B cell (primary cell): ENCODE measurements at regions of chr18 and their contacts with region 1.

Region 1: GRCh38 chr18:26226229-26227005 is at the start of gene TAF4B:
- DNase-seq: peak; percentile 96
- ATAC-seq: peak; percentile 85
- H3K4me3 ChIP-seq: peak within 1 kb of the TSS; percentile 66 to 91 (median 82)
- H3K4me3 Mint-ChIP-seq: peak within 1 kb of the TSS; percentile 94
- H3K27ac ChIP-seq: peak within 1 kb of the TSS; percentile 88 to 95
- H3K27ac Mint-ChIP-seq: peak within 1 kb of the TSS; percentile 96
- H3K4me1 ChIP-seq: peaks cover 21 to 24% of the 10 kb centered on the region in 2 donors
- H3K4me1 Mint-ChIP-seq: peaks cover 38% of the 10 kb centered on the region
- H3K27me3 ChIP-seq: no peaks in the 10 kb centered on the region
- H3K27me3 Mint-ChIP-seq: no peaks in the 10 kb centered on the region
- CTCF ChIP-seq: no peak
- total RNA-seq, gene TAF4B: 15.6 and 16.1 TPM in 2 replicates

Region 2: GRCh38 chr18:25351777-25352628 is 874.4 kb before region 1 on chr18 and contains the start of gene ZNF521:
- CTCF ChIA-PET with region 1: no interaction called
- POLR2A ChIA-PET with region 1: no interaction called
- intact Hi-C with region 1: loop called (anchors 2 kb)
- DNase-seq: peak; percentile 77
- ATAC-seq: peak; percentile 85
- H3K4me3 ChIP-seq: peak within 1 kb of the TSS; percentile 53 to 73 (median 70)
- H3K4me3 Mint-ChIP-seq: peak within 1 kb of the TSS; percentile 85
- H3K27ac ChIP-seq: no peak within 1 kb of the TSS
- H3K27ac Mint-ChIP-seq: peak within 1 kb of the TSS; percentile 46
- H3K4me1 ChIP-seq: peaks cover 24 to 28% of the 10 kb centered on the region in 2 donors
- H3K4me1 Mint-ChIP-seq: peaks cover 16% of the 10 kb centered on the region
- H3K27me3 ChIP-seq: peaks cover 0 to 53% (median 41%) of the 10 kb centered on the region in 4 experiments
- H3K27me3 Mint-ChIP-seq: peaks cover 43% of the 10 kb centered on the region
- CTCF ChIP-seq: no peak
- total RNA-seq, gene ZNF521: 9.0 and 12.3 TPM in 2 replicates

Region 3: GRCh38 chr18:25976554-25976953 is 249.9 kb before region 1 on chr18:
- CTCF ChIA-PET with region 1: no interaction called
- POLR2A ChIA-PET with region 1: no interaction called
- intact Hi-C with region 1: no loop called
- DNase-seq: no peak
- ATAC-seq: no peak
- H3K4me3 ChIP-seq: no peak overlapping the region
- H3K4me3 Mint-ChIP-seq: no peak overlapping the region
- H3K27ac ChIP-seq: no peak overlapping the region
- H3K27ac Mint-ChIP-seq: no peak overlapping the region
- H3K4me1 ChIP-seq: no peaks in the 10 kb centered on the region
- H3K4me1 Mint-ChIP-seq: peaks cover 4% of the 10 kb centered on the region
- H3K27me3 ChIP-seq: no peaks in the 10 kb centered on the region
- H3K27me3 Mint-ChIP-seq: peaks cover 5% of the 10 kb centered on the region
- CTCF ChIP-seq: no peak

Region 4: DNA sequence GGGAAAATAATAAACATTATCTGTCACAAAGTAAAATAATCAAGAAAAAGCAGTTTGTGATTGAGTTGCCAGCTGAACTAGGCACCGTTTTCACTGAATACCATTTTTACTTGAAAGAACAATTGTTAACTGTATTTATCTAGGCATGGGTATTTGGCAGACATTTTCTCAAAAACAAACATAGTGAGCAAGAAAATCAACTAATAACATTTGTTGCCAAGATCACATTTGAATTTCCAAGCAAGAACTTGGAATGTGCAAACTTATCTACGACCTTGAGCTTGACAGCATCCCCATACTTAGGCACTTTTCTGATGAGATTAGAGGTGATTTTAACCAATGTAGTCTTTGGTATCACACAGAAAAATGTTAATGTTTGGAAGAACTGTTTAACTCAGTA is 152.7 kb before region 1 on chr18:
- CTCF ChIA-PET with region 1: no interaction called
- POLR2A ChIA-PET with region 1: no interaction called
- intact Hi-C with region 1: loop called (anchors 5 kb)
- DNase-seq: no peak
- ATAC-seq: no peak
- H3K4me3 ChIP-seq: no peak overlapping the region
- H3K4me3 Mint-ChIP-seq: no peak overlapping the region
- H3K27ac ChIP-seq: no peak overlapping the region
- H3K27ac Mint-ChIP-seq: no peak overlapping the region
- H3K4me1 ChIP-seq: no peaks in the 10 kb centered on the region
- H3K4me1 Mint-ChIP-seq: peaks cover 28% of the 10 kb centered on the region
- H3K27me3 ChIP-seq: no peaks in the 10 kb centered on the region
- H3K27me3 Mint-ChIP-seq: no peaks in the 10 kb centered on the region
- CTCF ChIP-seq: no peak

Region 5: DNA sequence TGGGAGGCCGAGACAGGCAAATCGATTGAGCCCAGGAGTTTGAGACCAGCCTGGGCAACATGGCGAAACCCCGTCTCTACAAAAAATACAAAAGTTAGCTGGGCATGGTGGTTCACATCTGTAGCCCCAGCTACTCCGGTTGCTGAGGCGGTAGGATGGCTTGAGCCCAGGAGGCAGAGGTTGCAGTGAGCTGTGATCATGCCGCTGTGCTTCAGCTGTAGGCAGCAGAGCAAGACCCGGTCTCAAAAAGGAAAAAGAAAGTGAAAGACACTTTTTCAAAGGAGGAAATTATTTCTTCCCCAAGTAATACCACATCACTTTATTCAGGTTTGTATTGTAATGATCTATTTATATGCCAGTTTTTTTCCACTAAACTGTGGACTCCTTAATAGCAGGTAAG is 35.9 kb before region 1 on chr18:
- CTCF ChIA-PET with region 1: interaction called, 3 read pairs
- POLR2A ChIA-PET with region 1: interaction called, 4 read pairs
- intact Hi-C with region 1: loop called (anchors 1 kb)
- DNase-seq: peak; percentile 79
- ATAC-seq: peak; percentile 93
- H3K4me3 ChIP-seq: peak overlapping the region in 4 of 5 experiments; percentile 11 to 59 (median 18)
- H3K4me3 Mint-ChIP-seq: peak overlapping the region; percentile 57
- H3K27ac ChIP-seq: peak overlapping the region; percentile 59 to 90
- H3K27ac Mint-ChIP-seq: peak overlapping the region; percentile 80
- H3K4me1 ChIP-seq: peaks cover 20 to 26% of the 10 kb centered on the region in 2 donors
- H3K4me1 Mint-ChIP-seq: peaks cover 32% of the 10 kb centered on the region
- H3K27me3 ChIP-seq: no peaks in the 10 kb centered on the region
- H3K27me3 Mint-ChIP-seq: no peaks in the 10 kb centered on the region
- CTCF ChIP-seq: no peak

Region 6: GRCh38 chr18:26215247-26215970 is 11.0 kb before region 1 on chr18:
- CTCF ChIA-PET with region 1: no interaction called
- POLR2A ChIA-PET with region 1: interaction called, 3 read pairs
- intact Hi-C with region 1: loop called (anchors 1 kb)
- DNase-seq: peak; percentile 75
- ATAC-seq: peak; percentile 93
- H3K4me3 ChIP-seq: peak overlapping the region in 3 of 5 experiments; percentile 36 to 52 (median 39)
- H3K4me3 Mint-ChIP-seq: peak overlapping the region; percentile 74
- H3K27ac ChIP-seq: peak overlapping the region; percentile 56 to 83
- H3K27ac Mint-ChIP-seq: peak overlapping the region; percentile 82
- H3K4me1 ChIP-seq: peaks cover 17 to 19% of the 10 kb centered on the region in 2 donors
- H3K4me1 Mint-ChIP-seq: peaks cover 19% of the 10 kb centered on the region
- H3K27me3 ChIP-seq: no peaks in the 10 kb centered on the region
- H3K27me3 Mint-ChIP-seq: no peaks in the 10 kb centered on the region
- CTCF ChIP-seq: no peak

Region 7: DNA sequence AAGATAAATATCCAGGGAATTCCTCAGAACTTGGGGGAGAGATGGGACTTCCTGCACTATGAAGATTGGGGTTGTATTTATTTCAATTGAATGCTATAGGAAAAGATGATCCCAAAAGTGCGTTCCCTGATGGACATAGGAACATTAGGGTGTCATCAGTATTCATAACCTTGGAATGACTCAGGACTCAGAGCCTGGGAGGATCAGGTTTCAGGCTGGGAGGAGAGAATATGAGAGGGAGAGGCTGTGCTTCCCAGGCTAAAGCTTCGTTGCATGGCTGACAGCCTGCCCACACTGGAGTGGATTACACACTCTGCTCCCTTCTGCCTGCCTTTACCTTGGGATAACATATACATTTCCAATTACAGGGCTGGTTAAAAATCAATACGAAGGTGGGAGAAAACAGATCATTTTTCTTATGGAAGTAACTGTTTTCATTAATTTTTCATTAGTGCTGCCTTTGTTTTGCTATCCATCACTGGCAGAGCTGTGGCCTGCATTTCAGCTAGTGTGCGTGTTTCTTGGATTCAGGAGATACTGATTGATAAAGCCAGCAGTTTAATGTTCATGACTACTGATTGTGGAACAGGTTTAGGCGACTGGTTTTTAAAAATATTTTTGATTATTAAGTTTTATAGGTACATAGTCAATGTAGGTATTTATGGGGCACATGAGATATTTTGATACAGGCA is 203.3 kb after region 1 on chr18:
- CTCF ChIA-PET with region 1: no interaction called
- POLR2A ChIA-PET with region 1: no interaction called
- intact Hi-C with region 1: no loop called
- DNase-seq: no peak
- ATAC-seq: no peak
- H3K4me3 ChIP-seq: no peak overlapping the region
- H3K4me3 Mint-ChIP-seq: no peak overlapping the region
- H3K27ac ChIP-seq: no peak overlapping the region
- H3K27ac Mint-ChIP-seq: no peak overlapping the region
- H3K4me1 ChIP-seq: no peaks in the 10 kb centered on the region
- H3K4me1 Mint-ChIP-seq: no peaks in the 10 kb centered on the region
- H3K27me3 ChIP-seq: no peaks in the 10 kb centered on the region
- H3K27me3 Mint-ChIP-seq: no peaks in the 10 kb centered on the region
- CTCF ChIP-seq: no peak

Region 8: GRCh38 chr18:26723981-26724380 is 497.6 kb after region 1 on chr18:
- CTCF ChIA-PET with region 1: no interaction called
- POLR2A ChIA-PET with region 1: no interaction called
- intact Hi-C with region 1: no loop called
- DNase-seq: no peak
- ATAC-seq: no peak
- H3K4me3 ChIP-seq: no peak overlapping the region
- H3K4me3 Mint-ChIP-seq: no peak overlapping the region
- H3K27ac ChIP-seq: no peak overlapping the region
- H3K27ac Mint-ChIP-seq: no peak overlapping the region
- H3K4me1 ChIP-seq: no peaks in the 10 kb centered on the region
- H3K4me1 Mint-ChIP-seq: no peaks in the 10 kb centered on the region
- H3K27me3 ChIP-seq: no peaks in the 10 kb centered on the region
- H3K27me3 Mint-ChIP-seq: no peaks in the 10 kb centered on the region
- CTCF ChIP-seq: no peak